ENCODE measurements at regions of chr2 and their contacts with region 1.

Region 1: GRCh38 chr2:68190991-68191731 is 33.5 kb downstream of the PNO1 start:
- DNase-seq: peak; percentile 80
- ATAC-seq: peak; percentile 80
- H3K4me3 ChIP-seq: no peak overlapping the region
- H3K27ac ChIP-seq: peak overlapping the region; percentile 19; the same call in 1 of the 2 replicates
- H3K4me1 ChIP-seq: peaks cover 30% of the 10 kb centered on the region
- H3K27me3 ChIP-seq: no peaks in the 10 kb centered on the region
- CTCF ChIP-seq: no peak

Region 2: DNA sequence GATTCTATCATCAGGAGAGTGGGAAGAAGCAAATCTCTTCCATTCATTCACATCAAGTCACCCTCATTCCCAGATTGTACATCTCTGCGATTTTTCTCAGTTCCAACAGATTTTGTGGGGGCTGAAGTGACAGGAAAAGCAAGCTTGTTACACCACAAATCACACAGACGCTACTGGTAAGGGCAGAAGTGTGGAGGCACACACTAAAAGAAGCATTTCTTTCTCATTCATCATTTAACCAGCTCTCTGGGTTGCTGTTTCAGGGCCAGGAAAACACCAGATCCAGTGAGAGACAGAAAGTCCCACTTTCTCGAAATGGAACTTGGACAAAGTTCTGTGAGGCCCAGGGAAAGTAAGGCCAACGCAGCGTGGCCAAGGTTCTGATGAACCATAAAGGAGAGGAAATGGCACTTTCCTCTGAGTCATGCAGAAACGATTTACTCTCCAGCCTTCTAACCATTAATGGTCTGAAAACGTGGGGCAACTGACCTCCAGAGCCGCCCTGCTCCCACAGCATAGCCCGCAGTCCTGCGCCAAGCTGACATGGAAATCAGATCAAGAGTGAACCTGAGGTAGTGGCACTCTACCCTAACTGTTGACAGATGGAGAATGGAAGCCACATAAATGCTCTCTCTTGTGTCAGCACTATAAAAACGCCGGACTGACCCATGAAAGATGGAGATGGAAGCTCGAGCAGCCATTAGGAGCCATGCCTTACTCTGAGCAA is 319.3 kb before region 1 on chr2:
- CTCF ChIA-PET with region 1: no interaction called
- POLR2A ChIA-PET with region 1: no interaction called
- in situ Hi-C with region 1: no loop called
- intact Hi-C with region 1: no loop called
- DNase-seq: no peak
- ATAC-seq: 0 out of 2 replicates have a peak, but pooled peaks have one; percentile 62
- H3K4me3 ChIP-seq: no peak overlapping the region
- H3K27ac ChIP-seq: no peak overlapping the region
- H3K4me1 ChIP-seq: 0 out of 2 replicates have a peak, but pooled peaks cover 4% of the 10 kb centered on the region
- H3K27me3 ChIP-seq: no peaks in the 10 kb centered on the region
- CTCF ChIP-seq: no peak

Region 3: DNA sequence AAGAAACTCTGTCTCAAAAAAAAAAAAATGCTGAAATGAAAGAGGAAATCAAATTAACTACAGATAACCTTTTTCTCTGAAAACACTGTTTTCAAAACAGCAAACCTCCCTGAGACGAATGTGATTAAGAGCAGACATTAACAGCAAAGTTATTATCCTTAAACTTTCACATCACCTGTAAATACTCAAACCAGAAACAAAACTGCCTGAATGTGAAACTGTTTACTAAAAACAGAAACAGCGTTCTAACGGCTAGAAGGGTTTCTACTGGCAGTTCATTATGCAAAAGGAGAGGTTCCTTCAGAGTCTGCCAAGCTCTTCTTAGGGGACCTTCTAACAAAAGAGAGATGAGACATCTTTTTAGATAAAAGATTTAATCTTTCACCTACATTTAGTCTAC is 12.4 kb after region 1 on chr2:
- CTCF ChIA-PET with region 1: no interaction called
- POLR2A ChIA-PET with region 1: interaction called, 10 read pairs
- in situ Hi-C with region 1: no loop called
- intact Hi-C with region 1: no loop called
- DNase-seq: no peak
- ATAC-seq: no peak
- H3K4me3 ChIP-seq: no peak overlapping the region
- H3K27ac ChIP-seq: no peak overlapping the region
- H3K4me1 ChIP-seq: 0 out of 2 replicates have a peak, but pooled peaks cover 3% of the 10 kb centered on the region
- H3K27me3 ChIP-seq: no peaks in the 10 kb centered on the region
- CTCF ChIP-seq: no peak

Region 4: GRCh38 chr2:68238955-68239822 is 48.0 kb after region 1 on chr2:
- CTCF ChIA-PET with region 1: no interaction called
- POLR2A ChIA-PET with region 1: no interaction called
- in situ Hi-C with region 1: no loop called
- intact Hi-C with region 1: loop called (anchors 5 kb)
- DNase-seq: no peak
- ATAC-seq: no peak
- H3K4me3 ChIP-seq: no peak overlapping the region
- H3K27ac ChIP-seq: no peak overlapping the region
- H3K4me1 ChIP-seq: peaks cover 29% of the 10 kb centered on the region
- H3K27me3 ChIP-seq: no peaks in the 10 kb centered on the region
- CTCF ChIP-seq: no peak

Region 5: GRCh38 chr2:68762665-68763064 is 571.5 kb after region 1 on chr2:
- CTCF ChIA-PET with region 1: no interaction called
- POLR2A ChIA-PET with region 1: no interaction called
- in situ Hi-C with region 1: no loop called
- intact Hi-C with region 1: no loop called
- DNase-seq: no peak
- ATAC-seq: no peak
- H3K4me3 ChIP-seq: no peak overlapping the region
- H3K27ac ChIP-seq: no peak overlapping the region
- H3K4me1 ChIP-seq: no peaks in the 10 kb centered on the region; the same call in none of the 2 replicates
- H3K27me3 ChIP-seq: no peaks in the 10 kb centered on the region
- CTCF ChIP-seq: no peak

Measured in Panc1 (cell line).